ENCODE measurements at regions of chr13 and their contacts with region 1.

Region 1: DNA sequence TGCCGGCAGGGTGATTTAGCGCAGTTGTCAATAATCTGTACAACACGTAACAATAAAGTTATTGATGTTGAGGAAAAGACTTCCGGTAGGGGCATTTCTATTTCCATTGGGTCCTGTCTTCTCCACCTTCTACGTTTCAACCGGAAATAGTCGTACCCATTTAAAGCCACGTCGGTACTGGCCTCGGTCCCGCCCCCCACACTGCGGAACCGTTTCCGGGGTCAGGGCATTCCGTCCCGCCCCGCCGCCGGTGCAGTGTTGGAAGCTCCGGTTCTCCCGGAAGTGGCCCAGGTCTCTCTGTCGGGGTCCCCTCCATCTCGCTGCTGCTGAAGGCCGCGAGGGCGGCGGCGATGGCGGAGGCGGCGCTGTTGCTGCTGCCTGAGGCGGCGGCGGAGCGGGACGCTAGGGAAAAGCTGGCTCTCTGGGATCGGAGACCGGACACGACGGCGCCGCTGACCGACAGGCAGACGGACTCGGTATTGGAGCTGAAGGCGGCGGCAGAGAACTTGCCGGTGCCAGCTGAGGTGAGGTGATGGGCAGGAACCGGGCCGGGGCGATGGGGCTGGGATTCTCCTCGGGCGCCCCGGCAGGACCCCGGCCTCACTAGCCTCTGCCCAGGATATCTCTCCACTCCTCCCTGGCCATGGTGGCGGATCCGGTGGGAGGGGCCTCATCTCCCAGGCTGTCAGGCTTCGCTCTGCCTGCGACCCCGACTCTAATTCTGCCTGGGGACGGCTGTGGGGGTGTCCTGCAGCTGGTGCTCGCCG is at the start of gene COG3:
- DNase-seq: peak; percentile 90
- ATAC-seq: peak; percentile 97
- H3K4me3 Mint-ChIP-seq: peak within 1 kb of the TSS; percentile 95
- H3K27ac Mint-ChIP-seq: peak within 1 kb of the TSS; percentile 90
- H3K4me1 Mint-ChIP-seq: peaks cover 41% of the 10 kb centered on the region
- H3K27me3 Mint-ChIP-seq: peaks cover 1% of the 10 kb centered on the region
- CTCF ChIP-seq: no peak
- total RNA-seq, gene COG3: 26.0 and 31.6 TPM in 2 replicates

Region 2: DNA sequence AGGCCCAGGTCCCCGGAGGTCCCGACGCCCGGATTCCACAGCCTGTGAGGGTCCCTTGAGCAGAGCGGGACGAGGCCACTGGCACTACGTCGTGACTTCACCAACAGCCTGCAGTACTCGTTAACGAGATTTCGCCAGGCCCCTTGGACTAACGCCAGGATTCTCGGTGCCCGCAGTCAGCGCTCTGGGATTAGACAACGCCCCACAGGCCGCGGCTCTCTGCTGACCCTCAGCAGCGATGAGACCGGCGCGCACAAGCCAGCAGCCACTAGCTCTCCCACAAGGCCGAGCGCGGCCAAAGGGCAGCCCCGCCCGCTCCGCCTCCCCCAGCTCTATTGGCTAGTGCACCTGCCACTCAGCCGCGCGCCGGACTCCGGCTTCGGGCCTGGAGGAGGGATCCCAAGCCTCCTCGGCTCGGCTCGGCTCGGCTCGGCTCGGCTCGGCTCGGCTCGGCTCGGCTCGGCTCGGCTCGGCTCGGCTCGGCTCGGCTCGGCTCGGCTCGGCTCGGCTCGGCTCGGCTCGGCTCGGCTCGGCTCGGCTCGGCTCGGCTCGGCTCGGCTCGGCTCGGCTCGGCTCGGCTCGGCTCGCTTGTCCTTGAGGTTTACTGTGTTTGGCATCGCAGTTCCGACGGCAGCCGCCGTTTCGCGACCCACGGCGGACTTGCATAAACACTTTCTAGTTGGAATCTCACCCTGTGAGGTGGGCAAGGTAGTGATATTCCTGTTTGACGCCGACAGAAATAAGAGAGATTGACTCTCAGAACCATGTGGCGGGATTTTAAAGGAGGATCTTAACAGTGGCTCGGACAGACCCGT is 1322.9 kb before region 1 on chr13:
- CTCF ChIA-PET with region 1: no interaction called
- POLR2A ChIA-PET with region 1: no interaction called
- intact Hi-C with region 1: loop called (anchors 10 kb)
- DNase-seq: peak; percentile 100
- ATAC-seq: peak; percentile 99
- H3K4me3 Mint-ChIP-seq: peak overlapping the region; percentile 93
- H3K27ac Mint-ChIP-seq: peak overlapping the region; percentile 86
- H3K4me1 Mint-ChIP-seq: peaks cover 29% of the 10 kb centered on the region
- H3K27me3 Mint-ChIP-seq: peaks cover 8% of the 10 kb centered on the region
- CTCF ChIP-seq: no peak

Region 3: GRCh38 chr13:44988973-44989817 is 475.7 kb before region 1 on chr13 and contains the starts of genes GPALPP1 and NUFIP1:
- CTCF ChIA-PET with region 1: no interaction called
- POLR2A ChIA-PET with region 1: no interaction called
- intact Hi-C with region 1: loop called (anchors 1 kb)
- DNase-seq: peak; percentile 80
- ATAC-seq: peak; percentile 97
- H3K4me3 Mint-ChIP-seq: peak within 1 kb of the TSS; percentile 99
- H3K27ac Mint-ChIP-seq: peak within 1 kb of the TSS; percentile 98
- H3K4me1 Mint-ChIP-seq: peaks cover 37% of the 10 kb centered on the region
- H3K27me3 Mint-ChIP-seq: no peaks in the 10 kb centered on the region
- CTCF ChIP-seq: no peak
- total RNA-seq, gene GPALPP1: 28.8 and 35.8 TPM in 2 replicates
- total RNA-seq, gene NUFIP1: 6.6 and 7.8 TPM in 2 replicates

Region 4: DNA sequence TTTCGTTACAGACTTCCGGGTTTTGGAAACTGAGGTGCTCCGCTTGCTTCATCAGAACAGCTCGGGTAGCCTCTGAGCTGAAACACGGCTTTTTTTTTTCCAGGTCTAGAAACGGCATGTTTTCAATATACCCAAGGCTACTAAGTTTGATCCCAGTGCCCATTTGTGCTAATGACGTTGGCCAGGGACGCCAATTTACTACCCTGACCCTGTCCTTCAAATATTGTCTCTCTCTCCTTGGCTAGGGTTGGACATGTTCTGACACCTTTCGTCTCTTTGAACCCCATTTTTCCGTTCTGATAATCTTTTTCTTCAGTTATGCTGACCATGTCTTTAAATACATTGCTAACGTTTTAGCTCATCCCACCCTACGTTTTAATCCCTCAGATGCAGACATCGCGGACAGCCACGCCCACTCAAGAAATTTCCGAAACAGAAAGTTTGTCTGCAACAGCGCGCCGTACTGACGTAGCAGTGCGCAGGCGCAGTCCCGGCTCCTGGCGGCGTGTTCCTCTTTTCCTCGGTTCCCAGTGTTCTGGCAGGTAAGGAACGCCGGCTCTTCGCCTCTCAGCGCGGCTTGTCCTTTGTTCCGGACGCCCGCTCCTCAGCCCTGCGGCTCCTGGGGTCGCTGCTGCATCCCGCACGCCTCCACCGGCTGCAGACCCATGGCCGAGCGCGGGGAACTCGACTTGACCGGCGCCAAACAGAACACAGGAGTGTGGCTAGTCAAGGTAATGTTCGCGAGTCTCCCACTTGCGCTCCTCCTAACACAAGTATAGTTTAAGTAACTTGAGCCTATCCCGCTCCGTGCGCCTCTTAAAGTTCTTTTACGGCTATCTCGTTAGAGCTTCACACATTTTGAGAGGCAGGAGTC is 344.6 kb before region 1 on chr13 and contains the start of gene GTF2F2:
- CTCF ChIA-PET with region 1: no interaction called
- POLR2A ChIA-PET with region 1: no interaction called
- intact Hi-C with region 1: loop called (anchors 1 kb)
- DNase-seq: peak; percentile 90
- ATAC-seq: peak; percentile 82
- H3K4me3 Mint-ChIP-seq: no peak within 1 kb of the TSS
- H3K27ac Mint-ChIP-seq: no peak within 1 kb of the TSS
- H3K4me1 Mint-ChIP-seq: peaks cover 9% of the 10 kb centered on the region
- H3K27me3 Mint-ChIP-seq: no peaks in the 10 kb centered on the region
- CTCF ChIP-seq: no peak
- total RNA-seq, gene GTF2F2: 19.4 and 19.8 TPM in 2 replicates

Region 5: DNA sequence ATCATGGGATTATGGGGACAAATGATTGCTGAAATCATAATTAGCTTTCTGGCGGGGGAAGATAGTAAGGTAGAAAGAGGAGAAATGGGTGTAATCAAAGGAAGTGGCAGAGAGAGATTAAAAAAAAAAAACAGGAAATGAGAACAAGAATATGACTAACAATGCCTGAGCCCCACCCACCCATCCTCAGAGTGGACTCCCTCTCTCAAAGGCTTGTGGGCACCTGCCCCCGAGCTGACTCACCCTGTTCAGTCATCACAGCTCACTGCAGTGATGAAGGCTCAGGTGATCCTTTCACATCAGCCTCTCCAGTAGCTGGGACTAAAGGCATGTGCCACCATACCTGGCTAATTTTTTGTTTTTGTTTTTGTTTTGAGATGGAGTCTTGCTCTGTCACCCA is 97.5 kb before region 1 on chr13:
- CTCF ChIA-PET with region 1: no interaction called
- POLR2A ChIA-PET with region 1: interaction called, 6 read pairs
- intact Hi-C with region 1: loop called (anchors 1 kb)
- DNase-seq: peak; percentile 56
- ATAC-seq: peak; percentile 100
- H3K4me3 Mint-ChIP-seq: peak overlapping the region; percentile 39
- H3K27ac Mint-ChIP-seq: peak overlapping the region; percentile 82
- H3K4me1 Mint-ChIP-seq: peaks cover 32% of the 10 kb centered on the region
- H3K27me3 Mint-ChIP-seq: no peaks in the 10 kb centered on the region
- CTCF ChIP-seq: no peak

Region 6: DNA sequence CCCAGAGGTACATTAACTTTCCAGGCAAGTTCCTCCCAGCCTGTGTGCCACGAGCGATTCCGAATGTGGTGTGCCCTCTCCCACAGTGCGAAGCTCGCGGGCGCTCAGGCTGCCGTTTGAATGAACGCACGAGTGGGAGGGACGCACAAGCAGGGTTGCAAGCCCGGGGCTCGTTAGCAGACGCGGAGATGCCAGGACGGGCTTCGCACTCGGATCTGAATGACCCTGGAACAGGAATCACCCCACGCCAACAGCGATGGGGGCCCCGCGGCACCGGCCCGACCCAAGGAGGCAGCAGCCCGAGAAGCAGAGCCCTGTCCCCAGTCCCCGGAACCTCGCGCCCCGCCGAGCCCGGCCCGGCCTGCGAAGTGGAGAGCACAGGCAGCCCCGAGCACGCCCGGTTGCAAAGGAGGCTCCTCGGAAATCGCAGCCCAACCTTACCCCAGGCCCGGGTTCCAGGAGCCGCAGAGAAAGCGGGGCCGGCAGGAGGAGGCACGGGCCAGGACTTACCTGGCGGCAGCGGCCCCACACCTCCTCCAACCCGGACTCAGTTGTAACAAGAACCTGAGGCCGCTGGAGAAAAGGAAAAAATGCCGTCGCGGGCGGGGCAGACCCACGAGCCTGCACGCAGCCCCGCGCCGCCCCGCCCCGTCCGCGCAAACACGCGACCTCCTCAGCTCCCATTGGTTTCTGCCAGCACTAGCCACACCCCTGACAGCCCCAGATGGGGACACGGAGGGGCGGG is 46.9 kb before region 1 on chr13 and contains the start of gene SLC25A30:
- CTCF ChIA-PET with region 1: no interaction called
- POLR2A ChIA-PET with region 1: interaction called, 33 read pairs
- intact Hi-C with region 1: loop called (anchors 1 kb)
- DNase-seq: peak; percentile 87
- ATAC-seq: peak; percentile 96
- H3K4me3 Mint-ChIP-seq: peak within 1 kb of the TSS; percentile 95
- H3K27ac Mint-ChIP-seq: peak within 1 kb of the TSS; percentile 97
- H3K4me1 Mint-ChIP-seq: peaks cover 22% of the 10 kb centered on the region
- H3K27me3 Mint-ChIP-seq: no peaks in the 10 kb centered on the region
- CTCF ChIP-seq: no peak
- total RNA-seq, gene SLC25A30: 19.0 and 19.3 TPM in 2 replicates

Measured in activated B cell treated with CpG ODN at 0.5 μM for 24 hours (primary cell).